ENCODE measurements at regions of chr12 and their contacts with region 1.

Region 1: DNA sequence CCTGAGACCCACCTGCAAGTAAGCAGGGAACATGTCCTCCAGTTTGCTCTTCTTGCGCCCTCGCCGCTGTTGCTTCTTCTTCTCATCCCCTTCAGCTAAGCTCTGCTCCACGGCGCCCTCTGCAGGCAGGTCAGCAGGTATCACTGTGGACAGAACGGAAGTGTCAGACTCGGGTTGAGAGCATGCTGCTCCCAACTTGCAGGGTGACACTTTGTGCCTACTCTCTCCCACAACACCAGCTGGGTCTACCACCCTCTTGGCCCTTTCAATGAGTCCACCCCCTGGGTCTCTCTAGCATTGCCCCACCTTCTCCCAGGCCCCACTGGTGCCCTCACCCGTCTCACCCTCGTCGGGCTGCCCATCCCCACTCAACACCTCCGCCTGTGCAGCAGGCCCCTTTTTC is 16.7 kb downstream of the KMT2D start:
- DNase-seq: no peak
- H3K4me3 ChIP-seq: no peak overlapping the region
- CTCF ChIP-seq: peak; percentile 76

Region 2: GRCh38 chr12:49008943-49009342 is 34.9 kb before region 1 on chr12:
- CTCF ChIA-PET with region 1: no interaction called
- POLR2A ChIA-PET with region 1: no interaction called
- DNase-seq: no peak
- H3K4me3 ChIP-seq: no peak overlapping the region
- CTCF ChIP-seq: no peak

Region 3: DNA sequence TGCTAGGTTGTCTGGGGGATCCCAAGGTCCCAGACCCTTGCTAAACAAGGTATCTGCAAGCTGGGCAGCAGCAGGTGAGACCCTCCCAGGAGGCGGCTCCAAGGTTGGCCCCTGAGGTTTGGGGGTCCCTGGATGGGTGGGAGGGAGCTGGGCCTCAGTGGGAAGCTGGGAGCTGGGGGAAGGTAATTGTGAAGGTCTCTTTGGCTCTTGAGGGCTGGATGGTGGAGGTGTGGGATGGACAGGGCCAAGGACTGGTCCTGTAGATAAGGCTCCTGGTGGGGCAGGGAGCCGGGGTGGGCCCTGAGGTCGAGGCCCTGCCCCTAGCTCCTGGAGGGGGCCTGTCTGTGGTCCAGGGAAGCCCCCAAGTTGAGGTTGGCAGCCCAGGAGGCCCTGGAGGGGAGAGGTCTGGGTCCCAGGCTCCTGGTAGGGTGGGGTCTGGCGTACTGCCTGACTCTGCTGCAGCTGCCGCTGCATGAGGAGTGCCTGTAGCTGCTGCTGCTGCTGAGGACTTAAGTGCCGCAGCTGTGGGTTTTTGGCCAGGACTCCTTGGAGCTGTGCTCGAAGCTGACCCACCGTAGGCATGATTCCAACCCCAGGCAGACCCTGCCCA is 12.2 kb before region 1 on chr12:
- CTCF ChIA-PET with region 1: interaction called, 68 read pairs
- POLR2A ChIA-PET with region 1: no interaction called
- DNase-seq: no peak
- H3K4me3 ChIP-seq: no peak overlapping the region
- CTCF ChIP-seq: no peak

Region 4: GRCh38 chr12:49055981-49056754 is 12.3 kb after region 1 on chr12:
- CTCF ChIA-PET with region 1: interaction called, 48 read pairs
- POLR2A ChIA-PET with region 1: no interaction called
- DNase-seq: peak; percentile 12
- H3K4me3 ChIP-seq: peak overlapping the region; percentile 84
- CTCF ChIP-seq: no peak